ENCODE measurements at regions of chr22 and their contacts with region 1.

Region 1: GRCh38 chr22:27507111-27507611 is 294.4 kb downstream of the MN1 start:
- DNase-seq: no peak
- ATAC-seq: peak; percentile 44

Region 2: DNA sequence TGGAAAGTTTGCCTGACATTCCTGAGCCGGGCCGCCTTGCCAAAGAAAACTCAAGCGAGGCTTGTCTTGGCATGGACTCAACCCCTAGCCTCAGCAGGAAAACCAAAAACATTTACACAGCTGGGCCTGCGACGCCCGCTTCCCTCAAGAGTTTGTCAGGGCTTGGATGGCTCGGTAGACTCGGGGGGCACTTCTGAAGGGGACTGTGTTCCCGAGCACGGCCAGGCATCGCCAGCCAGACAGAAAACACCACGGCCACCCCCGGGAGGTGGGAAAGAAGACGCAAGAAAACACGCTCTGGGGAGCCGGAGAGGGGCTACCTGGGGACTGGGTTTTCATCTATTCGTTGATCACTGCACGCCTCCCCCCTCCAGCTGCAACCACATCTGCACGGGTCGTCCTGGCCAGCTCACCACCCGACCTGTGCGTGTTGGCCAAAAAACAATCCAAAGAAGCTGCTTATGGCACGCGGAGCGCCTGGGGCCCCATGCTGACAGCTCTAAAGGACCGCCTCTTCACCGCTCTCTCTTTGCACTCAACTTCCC is 86.3 kb before region 1 on chr22:
- intact Hi-C with region 1: loop called (anchors 5 kb)
- DNase-seq: peak; percentile 85
- ATAC-seq: peak; percentile 84

Measured in Right ventricle myocardium inferior (tissue), 1 donor.